ENCODE measurements at regions of chr6 and their contacts with region 1.

Region 1: DNA sequence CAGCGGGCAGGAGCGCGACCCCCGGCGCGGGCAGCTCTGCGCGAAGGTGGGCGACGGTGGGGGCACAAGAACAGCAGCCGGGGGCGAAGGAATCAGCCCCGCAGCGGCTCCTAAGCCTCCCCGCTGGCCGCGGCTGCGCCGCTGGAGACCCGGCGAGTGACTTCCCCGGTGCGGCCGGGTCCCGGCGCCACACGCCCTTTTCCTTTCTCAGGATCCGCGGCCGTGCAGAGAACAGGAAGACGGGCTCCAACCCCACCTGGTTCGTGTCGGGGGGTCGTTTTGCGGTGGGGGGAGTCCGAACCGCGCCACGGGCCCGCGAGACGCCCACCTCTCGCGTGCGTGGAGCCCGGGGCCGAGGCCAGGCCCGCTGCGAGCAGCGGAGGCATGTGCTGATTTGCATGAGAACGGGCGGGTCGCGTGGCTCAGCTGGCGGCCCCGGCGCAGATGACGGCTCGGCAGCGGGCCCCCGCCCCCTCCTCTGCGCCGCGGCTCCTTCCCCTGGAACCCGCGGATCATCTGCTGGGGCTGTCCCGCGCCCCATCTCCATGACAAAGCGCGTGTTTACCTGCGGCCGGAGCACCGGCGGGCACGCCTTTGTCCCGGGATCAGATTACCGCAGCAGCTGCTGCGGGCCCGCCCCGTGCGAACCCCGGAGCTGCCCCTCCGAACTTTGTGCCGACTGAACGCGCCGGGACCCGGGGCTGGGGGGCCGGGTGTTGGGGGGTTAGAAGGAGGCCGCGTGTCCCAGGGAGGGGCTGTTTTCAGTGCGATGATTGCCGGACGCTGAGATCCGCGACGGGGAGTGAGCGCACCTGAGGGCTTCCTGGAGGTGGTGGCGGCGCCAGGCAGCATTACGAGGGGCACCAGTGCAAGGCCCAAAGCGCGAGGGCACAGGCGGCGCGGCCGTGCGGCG is 4.9 kb upstream of the DLL1 start:
- H3K4me3 Mint-ChIP-seq: peak overlapping the region; percentile 81
- H3K27ac Mint-ChIP-seq: no peak overlapping the region
- H3K4me1 Mint-ChIP-seq: peaks cover 55% of the 10 kb centered on the region
- H3K27me3 Mint-ChIP-seq: peaks cover 95% of the 10 kb centered on the region

Region 2: GRCh38 chr6:169990095-169991030 is 305.4 kb before region 1 on chr6:
- intact Hi-C with region 1: loop called (anchors 10 kb)
- H3K4me3 Mint-ChIP-seq: peak overlapping the region; percentile 38
- H3K27ac Mint-ChIP-seq: peak overlapping the region; percentile 43
- H3K4me1 Mint-ChIP-seq: peaks cover 32% of the 10 kb centered on the region
- H3K27me3 Mint-ChIP-seq: peaks cover 1% of the 10 kb centered on the region

Region 3: DNA sequence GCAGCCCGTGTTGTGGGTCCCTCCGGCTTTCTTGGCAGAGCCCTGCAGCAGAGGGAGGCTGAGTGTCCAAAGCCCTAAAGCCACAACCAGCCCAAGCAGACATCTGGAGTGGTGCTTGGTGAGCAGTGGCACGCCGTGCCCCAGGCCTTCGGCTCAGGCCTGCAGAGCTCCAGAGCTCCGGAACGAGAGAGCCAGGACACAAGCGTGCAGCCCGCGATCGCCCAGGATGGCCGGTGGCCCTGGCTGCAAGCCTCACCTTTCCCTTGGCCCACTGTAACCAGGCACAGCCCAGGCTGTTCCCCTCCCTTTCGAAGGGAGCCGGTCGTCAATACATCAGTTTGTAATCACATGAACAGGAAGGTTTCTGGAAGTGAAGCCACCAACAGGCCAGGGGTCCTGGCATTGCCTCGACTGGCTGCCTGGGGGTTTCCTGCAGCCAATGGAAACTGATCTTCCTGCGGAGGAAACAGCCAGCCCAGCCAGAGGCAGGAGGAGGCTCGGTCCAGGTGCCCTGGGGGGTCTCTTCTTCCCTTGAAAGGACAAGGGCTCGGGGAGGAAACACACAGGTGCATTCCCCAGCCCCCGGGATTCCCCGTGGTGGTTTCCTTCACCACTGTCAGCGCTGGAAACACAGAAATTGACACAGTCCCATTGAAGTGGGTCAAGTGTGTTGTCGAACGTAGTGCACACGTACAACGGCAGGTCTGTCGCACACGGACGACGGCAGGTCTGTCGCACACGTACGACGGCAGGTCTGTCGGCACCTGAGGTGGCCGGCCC is 86.0 kb before region 1 on chr6:
- intact Hi-C with region 1: no loop called
- H3K4me3 Mint-ChIP-seq: no peak overlapping the region
- H3K27ac Mint-ChIP-seq: no peak overlapping the region
- H3K4me1 Mint-ChIP-seq: no peaks in the 10 kb centered on the region
- H3K27me3 Mint-ChIP-seq: peaks cover 13% of the 10 kb centered on the region

Region 4: GRCh38 chr6:170306324-170307079 is 10.7 kb after region 1 on chr6 and contains the start of gene FAM120B:
- intact Hi-C with region 1: loop called (anchors 2 kb)
- H3K4me3 Mint-ChIP-seq: peak within 1 kb of the TSS; percentile 99
- H3K27ac Mint-ChIP-seq: peak within 1 kb of the TSS; percentile 97
- H3K4me1 Mint-ChIP-seq: peaks cover 50% of the 10 kb centered on the region
- H3K27me3 Mint-ChIP-seq: peaks cover 20% of the 10 kb centered on the region

Region 5: GRCh38 chr6:170423030-170423429 is 127.3 kb after region 1 on chr6:
- intact Hi-C with region 1: no loop called
- H3K4me3 Mint-ChIP-seq: no peak overlapping the region
- H3K27ac Mint-ChIP-seq: no peak overlapping the region
- H3K4me1 Mint-ChIP-seq: no peaks in the 10 kb centered on the region
- H3K27me3 Mint-ChIP-seq: peaks cover 12% of the 10 kb centered on the region